CD8-positive, alpha-beta memory T cell (primary cell): ENCODE measurements at regions of chr17 and their contacts with region 1.

Region 1: GRCh38 chr17:60036796-60037612 is 41.7 kb downstream of the HEATR6 start:
- DNase-seq: peak; percentile 53 to 77 (median 58)
- H3K4me3 ChIP-seq: peak overlapping the region; percentile 14
- H3K4me3 Mint-ChIP-seq: no peak overlapping the region
- H3K27ac ChIP-seq: no peak overlapping the region
- H3K27ac Mint-ChIP-seq: no peak overlapping the region
- H3K4me1 ChIP-seq: peaks cover 7% of the 10 kb centered on the region
- H3K4me1 Mint-ChIP-seq: peaks cover 5 to 7% (median 5%) of the 10 kb centered on the region in 3 donors
- H3K27me3 ChIP-seq: no peaks in the 10 kb centered on the region
- H3K27me3 Mint-ChIP-seq: peaks cover 12 to 20% of the 10 kb centered on the region in 2 donors

Region 2: DNA sequence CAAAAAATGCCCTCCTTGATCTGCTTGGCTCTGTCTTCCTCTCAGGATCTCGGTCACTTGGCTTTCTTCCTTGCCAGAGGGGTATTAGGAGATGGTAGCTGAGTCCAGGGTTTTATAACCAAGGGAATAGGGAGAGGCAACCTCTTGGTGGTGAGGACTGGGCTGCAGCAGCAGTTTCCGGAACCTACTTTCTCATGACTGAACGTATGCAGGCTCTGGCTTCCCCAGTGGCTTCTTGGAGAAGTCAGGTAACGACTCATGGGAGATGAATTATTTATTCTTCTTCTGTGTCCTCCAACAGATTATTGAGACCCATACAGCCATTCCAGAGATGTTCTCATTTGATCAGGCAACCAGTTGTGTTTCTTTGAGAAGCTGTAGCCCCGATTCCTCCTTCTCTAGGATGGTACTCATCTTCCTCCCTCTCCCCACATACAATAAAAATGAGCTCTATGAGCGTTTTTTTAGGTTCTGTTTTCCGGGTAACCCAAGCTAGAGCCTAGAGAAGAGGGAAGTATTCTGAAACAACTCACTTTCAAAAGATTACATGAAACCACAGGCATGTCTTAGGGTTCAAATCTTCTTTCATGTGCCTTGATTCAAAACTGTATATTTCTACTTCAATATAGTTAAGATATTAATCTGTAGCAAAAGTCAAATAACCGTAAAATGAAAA is 493.9 kb before region 1 on chr17:
- CTCF ChIA-PET with region 1: no interaction called
- POLR2A ChIA-PET with region 1: no interaction called
- DNase-seq: no peak
- H3K4me3 ChIP-seq: no peak overlapping the region
- H3K4me3 Mint-ChIP-seq: no peak overlapping the region
- H3K27ac ChIP-seq: no peak overlapping the region
- H3K27ac Mint-ChIP-seq: no peak overlapping the region
- H3K4me1 ChIP-seq: no peaks in the 10 kb centered on the region
- H3K4me1 Mint-ChIP-seq: no peaks in the 10 kb centered on the region
- H3K27me3 ChIP-seq: no peaks in the 10 kb centered on the region
- H3K27me3 Mint-ChIP-seq: peaks cover 14 to 44% of the 10 kb centered on the region in 2 donors

Region 3: DNA sequence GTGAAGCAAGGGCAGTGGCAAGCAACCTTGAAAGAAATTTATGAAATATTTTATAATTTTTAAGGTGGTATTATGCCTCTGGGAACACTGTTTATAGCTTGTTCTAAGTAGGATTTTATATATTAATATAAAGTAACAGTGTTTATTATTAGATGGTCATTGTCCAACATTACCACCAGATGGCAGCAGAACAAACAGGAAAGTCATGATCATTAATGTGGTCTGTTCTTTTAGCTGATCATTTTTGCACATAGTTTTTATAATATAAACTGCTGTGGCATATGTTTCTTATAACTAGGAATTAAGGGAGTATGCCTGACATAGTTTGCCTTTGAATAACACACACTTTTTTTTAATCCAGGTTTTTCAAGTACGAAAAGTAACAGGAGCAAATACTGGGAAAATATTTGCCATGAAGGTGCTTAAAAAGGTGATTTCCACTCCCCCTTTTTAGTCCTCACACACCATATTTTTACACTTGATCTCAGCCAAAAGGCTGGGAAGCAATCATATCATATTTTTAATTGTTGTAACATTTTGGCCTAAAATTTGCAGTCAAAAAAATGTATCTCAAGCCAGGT is 122.6 kb before region 1 on chr17:
- CTCF ChIA-PET with region 1: interaction called, 30 read pairs
- POLR2A ChIA-PET with region 1: interaction called, 9 read pairs
- DNase-seq: peak in 2 of 5 donors; percentile 32 to 40
- H3K4me3 ChIP-seq: no peak overlapping the region
- H3K4me3 Mint-ChIP-seq: no peak overlapping the region
- H3K27ac ChIP-seq: no peak overlapping the region
- H3K27ac Mint-ChIP-seq: no peak overlapping the region
- H3K4me1 ChIP-seq: no peaks in the 10 kb centered on the region
- H3K4me1 Mint-ChIP-seq: peaks cover 3 to 7% (median 6%) of the 10 kb centered on the region in 3 donors
- H3K27me3 ChIP-seq: no peaks in the 10 kb centered on the region
- H3K27me3 Mint-ChIP-seq: no peaks in the 10 kb centered on the region

Region 4: DNA sequence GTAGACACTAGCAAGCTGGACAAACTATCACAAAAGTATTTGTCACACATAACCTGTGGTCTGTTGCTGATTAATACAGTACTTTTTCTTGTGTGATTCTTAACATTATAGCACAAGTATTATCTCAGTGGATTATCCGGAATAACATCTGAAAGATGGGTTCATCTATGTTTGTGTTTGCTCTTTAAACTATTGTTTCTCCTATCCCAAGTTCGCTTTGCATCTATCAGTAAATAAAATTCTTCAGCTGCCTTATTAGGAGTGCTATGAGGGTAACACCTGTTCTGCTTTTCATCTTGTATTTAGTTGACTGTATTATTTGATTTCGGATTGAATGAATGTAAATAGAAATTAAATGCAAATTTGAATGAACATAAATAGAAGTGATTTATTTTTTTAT is 87.0 kb before region 1 on chr17:
- CTCF ChIA-PET with region 1: no interaction called
- POLR2A ChIA-PET with region 1: no interaction called
- DNase-seq: no peak
- H3K4me3 ChIP-seq: no peak overlapping the region
- H3K4me3 Mint-ChIP-seq: no peak overlapping the region
- H3K27ac ChIP-seq: no peak overlapping the region
- H3K27ac Mint-ChIP-seq: peak overlapping the region in 1 of 8 donors; percentile 35
- H3K4me1 ChIP-seq: no peaks in the 10 kb centered on the region
- H3K4me1 Mint-ChIP-seq: peaks cover 2 to 12% (median 11%) of the 10 kb centered on the region in 3 donors
- H3K27me3 ChIP-seq: no peaks in the 10 kb centered on the region
- H3K27me3 Mint-ChIP-seq: no peaks in the 10 kb centered on the region

Region 5: GRCh38 chr17:60091908-60092331 is 54.9 kb after region 1 on chr17:
- CTCF ChIA-PET with region 1: no interaction called
- POLR2A ChIA-PET with region 1: no interaction called
- DNase-seq: no peak
- H3K4me3 ChIP-seq: no peak overlapping the region
- H3K4me3 Mint-ChIP-seq: no peak overlapping the region
- H3K27ac ChIP-seq: no peak overlapping the region
- H3K27ac Mint-ChIP-seq: no peak overlapping the region
- H3K4me1 ChIP-seq: no peaks in the 10 kb centered on the region
- H3K4me1 Mint-ChIP-seq: no peaks in the 10 kb centered on the region
- H3K27me3 ChIP-seq: no peaks in the 10 kb centered on the region
- H3K27me3 Mint-ChIP-seq: peaks cover 12 to 21% of the 10 kb centered on the region in 2 donors

Region 6: GRCh38 chr17:60321336-60322055 is 284.5 kb after region 1 on chr17:
- CTCF ChIA-PET with region 1: no interaction called
- POLR2A ChIA-PET with region 1: no interaction called
- DNase-seq: no peak
- H3K4me3 ChIP-seq: no peak overlapping the region
- H3K4me3 Mint-ChIP-seq: no peak overlapping the region
- H3K27ac ChIP-seq: no peak overlapping the region
- H3K27ac Mint-ChIP-seq: peak overlapping the region in 1 of 8 donors; percentile 4
- H3K4me1 ChIP-seq: no peaks in the 10 kb centered on the region
- H3K4me1 Mint-ChIP-seq: peaks cover 8 to 17% (median 17%) of the 10 kb centered on the region in 3 donors
- H3K27me3 ChIP-seq: no peaks in the 10 kb centered on the region
- H3K27me3 Mint-ChIP-seq: no peaks in the 10 kb centered on the region